ENCODE measurements at regions of chr17 and their contacts with region 1.

Region 1: GRCh38 chr17:12545877-12546513 is 119.7 kb upstream of the MYOCD start:
- DNase-seq: peak; percentile 27 to 61
- H3K4me3 ChIP-seq: no peak overlapping the region
- H3K27ac ChIP-seq: no peak overlapping the region
- H3K4me1 ChIP-seq: no peaks in the 10 kb centered on the region
- H3K27me3 ChIP-seq: no peaks in the 10 kb centered on the region
- CTCF ChIP-seq: peak; percentile 48 to 89 (median 66)
- EP300 ChIP-seq: no peak
- POLR2A ChIP-seq: no peak
- RAD21 ChIP-seq: peak; percentile 65 to 77

Region 2: GRCh38 chr17:12256380-12256995 is 289.5 kb before region 1 on chr17:
- CTCF ChIA-PET with region 1: interaction called, 12 read pairs
- POLR2A ChIA-PET with region 1: no interaction called
- DNase-seq: no peak
- H3K4me3 ChIP-seq: no peak overlapping the region
- H3K27ac ChIP-seq: no peak overlapping the region
- H3K4me1 ChIP-seq: no peaks in the 10 kb centered on the region
- H3K27me3 ChIP-seq: peaks cover 0 to 1% (median 0%) of the 10 kb centered on the region in 4 experiments; a peak in 1 of 7 replicates
- CTCF ChIP-seq: peak in 2 of 3 experiments; percentile 57 to 73; a peak in 3 of 4 replicates
- EP300 ChIP-seq: no peak
- POLR2A ChIP-seq: no peak
- RAD21 ChIP-seq: peak; percentile 86 to 88

Region 3: GRCh38 chr17:12395733-12396354 is 150.2 kb before region 1 on chr17:
- CTCF ChIA-PET with region 1: interaction called, 11 read pairs
- POLR2A ChIA-PET with region 1: no interaction called
- DNase-seq: peak in 1 of 2 experiments; percentile 68
- H3K4me3 ChIP-seq: no peak overlapping the region
- H3K27ac ChIP-seq: no peak overlapping the region
- H3K4me1 ChIP-seq: no peaks in the 10 kb centered on the region
- H3K27me3 ChIP-seq: no peaks in the 10 kb centered on the region
- CTCF ChIP-seq: peak; percentile 57 to 90 (median 61)
- EP300 ChIP-seq: no peak
- POLR2A ChIP-seq: no peak
- RAD21 ChIP-seq: peak; percentile 57 to 66

Region 4: GRCh38 chr17:12421646-12422306 is 124.2 kb before region 1 on chr17:
- CTCF ChIA-PET with region 1: no interaction called
- POLR2A ChIA-PET with region 1: no interaction called
- DNase-seq: no peak
- H3K4me3 ChIP-seq: no peak overlapping the region
- H3K27ac ChIP-seq: no peak overlapping the region
- H3K4me1 ChIP-seq: no peaks in the 10 kb centered on the region
- H3K27me3 ChIP-seq: no peaks in the 10 kb centered on the region
- CTCF ChIP-seq: no peak
- EP300 ChIP-seq: no peak
- POLR2A ChIP-seq: no peak
- RAD21 ChIP-seq: no peak

Region 5: GRCh38 chr17:12522743-12523183 is 23.2 kb before region 1 on chr17:
- CTCF ChIA-PET with region 1: interaction called, 12 read pairs
- POLR2A ChIA-PET with region 1: no interaction called
- DNase-seq: no peak
- H3K4me3 ChIP-seq: no peak overlapping the region
- H3K27ac ChIP-seq: no peak overlapping the region
- H3K4me1 ChIP-seq: no peaks in the 10 kb centered on the region; a peak in 1 of 7 replicates
- H3K27me3 ChIP-seq: no peaks in the 10 kb centered on the region
- CTCF ChIP-seq: no peak
- EP300 ChIP-seq: no peak
- POLR2A ChIP-seq: no peak
- RAD21 ChIP-seq: no peak

Region 6: GRCh38 chr17:12568358-12569251 is 22.6 kb after region 1 on chr17:
- CTCF ChIA-PET with region 1: interaction called, 11 read pairs
- POLR2A ChIA-PET with region 1: no interaction called
- DNase-seq: no peak
- H3K4me3 ChIP-seq: no peak overlapping the region
- H3K27ac ChIP-seq: no peak overlapping the region
- H3K4me1 ChIP-seq: peaks cover 0 to 7% (median 5%) of the 10 kb centered on the region in 4 experiments; a peak in 4 of 7 replicates
- H3K27me3 ChIP-seq: no peaks in the 10 kb centered on the region
- CTCF ChIP-seq: no peak
- EP300 ChIP-seq: no peak
- POLR2A ChIP-seq: no peak
- RAD21 ChIP-seq: no peak

Region 7: GRCh38 chr17:12579288-12579687 is 33.3 kb after region 1 on chr17:
- CTCF ChIA-PET with region 1: no interaction called
- POLR2A ChIA-PET with region 1: no interaction called
- DNase-seq: no peak
- H3K4me3 ChIP-seq: no peak overlapping the region
- H3K27ac ChIP-seq: no peak overlapping the region
- H3K4me1 ChIP-seq: no peaks in the 10 kb centered on the region
- H3K27me3 ChIP-seq: peaks cover 0 to 1% (median 0%) of the 10 kb centered on the region in 4 experiments; a peak in 1 of 7 replicates
- CTCF ChIP-seq: no peak
- EP300 ChIP-seq: no peak
- POLR2A ChIP-seq: no peak
- RAD21 ChIP-seq: no peak

Region 8: DNA sequence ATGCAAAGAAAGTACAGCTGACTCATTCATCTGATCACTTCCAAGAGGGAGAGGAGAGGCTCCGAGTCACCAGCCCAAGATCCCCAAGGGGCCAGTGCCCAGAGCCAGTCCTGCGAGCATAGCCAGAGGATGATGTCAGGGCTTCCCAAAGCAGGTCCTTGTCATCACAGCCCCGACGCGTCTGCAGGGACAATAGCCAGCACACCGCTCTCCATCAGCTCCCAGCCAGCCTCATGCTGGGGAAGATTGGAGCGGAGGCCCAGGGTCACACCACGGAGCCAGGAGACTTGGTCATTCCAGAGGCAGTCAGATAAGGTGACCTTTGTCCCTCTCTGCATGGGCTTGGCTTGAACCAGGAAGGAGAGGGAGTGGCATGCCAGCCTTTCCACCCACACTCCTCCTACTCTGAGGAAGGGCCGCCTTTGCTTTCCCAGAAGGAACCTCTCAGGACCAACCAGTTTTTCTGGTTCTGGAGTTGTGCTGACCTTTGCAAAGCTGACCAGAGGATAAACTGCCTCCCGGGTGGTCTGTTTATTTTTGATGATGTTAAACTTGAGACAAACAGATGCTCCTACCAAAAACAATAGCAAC is 185.0 kb after region 1 on chr17:
- CTCF ChIA-PET with region 1: no interaction called
- POLR2A ChIA-PET with region 1: no interaction called
- DNase-seq: peak in 1 of 2 experiments; percentile 63
- H3K4me3 ChIP-seq: 0 out of 8 replicates have a peak overlapping the region, but pooled peaks of 1 of the 4 experiments have one; percentile 0
- H3K27ac ChIP-seq: peak overlapping the region; percentile 55
- H3K4me1 ChIP-seq: peaks cover 0 to 6% (median 2%) of the 10 kb centered on the region in 4 experiments; a peak in 5 of 7 replicates
- H3K27me3 ChIP-seq: no peaks in the 10 kb centered on the region
- CTCF ChIP-seq: no peak
- EP300 ChIP-seq: no peak
- POLR2A ChIP-seq: no peak
- RAD21 ChIP-seq: no peak

Region 9: DNA sequence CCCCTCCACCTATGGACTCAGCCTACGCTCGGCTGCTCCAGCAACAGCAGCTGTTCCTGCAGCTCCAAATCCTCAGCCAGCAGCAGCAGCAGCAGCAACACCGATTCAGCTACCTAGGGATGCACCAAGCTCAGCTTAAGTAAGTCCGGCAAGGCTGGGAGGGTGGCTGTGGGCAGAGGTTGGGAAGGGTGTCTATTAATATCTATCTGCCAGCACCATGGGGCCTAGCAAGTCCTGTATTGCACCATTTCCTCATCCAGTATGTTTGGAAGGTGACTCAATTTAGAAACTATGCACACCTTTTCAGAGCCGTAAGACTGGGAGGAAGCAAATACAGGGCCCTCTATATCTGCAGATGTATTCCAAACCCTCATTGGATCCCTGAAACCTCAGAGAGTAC is 198.3 kb after region 1 on chr17:
- CTCF ChIA-PET with region 1: interaction called, 14 read pairs
- POLR2A ChIA-PET with region 1: interaction called, 4 read pairs
- DNase-seq: no peak
- H3K4me3 ChIP-seq: no peak overlapping the region
- H3K27ac ChIP-seq: no peak overlapping the region
- H3K4me1 ChIP-seq: peaks cover 0 to 3% (median 0%) of the 10 kb centered on the region in 4 experiments; a peak in 1 of 7 replicates
- H3K27me3 ChIP-seq: no peaks in the 10 kb centered on the region
- CTCF ChIP-seq: no peak
- EP300 ChIP-seq: no peak
- POLR2A ChIP-seq: no peak
- RAD21 ChIP-seq: no peak

Measured in H1 (cell line).